Dorsolateral prefrontal cortex (tissue), 120 donors: ENCODE measurements at regions of chr17 and their contacts with region 1.

Region 1: GRCh38 chr17:58006924-58007780 is at the start of gene SRSF1:
- DNase-seq: peak; percentile 92 to 97 (median 95)
- H3K4me3 ChIP-seq: peak within 1 kb of the TSS; percentile 62 to 100 (median 96)
- H3K27ac ChIP-seq: peak within 1 kb of the TSS; percentile 85 to 99 (median 98)
- H3K27me3 ChIP-seq: no peaks in the 10 kb centered on the region
- CTCF ChIP-seq: peak in 10 of 56 donors; percentile 6 to 47 (median 18)
- total RNA-seq, gene SRSF1: 111 to 191 (median 137) TPM

Region 2: DNA sequence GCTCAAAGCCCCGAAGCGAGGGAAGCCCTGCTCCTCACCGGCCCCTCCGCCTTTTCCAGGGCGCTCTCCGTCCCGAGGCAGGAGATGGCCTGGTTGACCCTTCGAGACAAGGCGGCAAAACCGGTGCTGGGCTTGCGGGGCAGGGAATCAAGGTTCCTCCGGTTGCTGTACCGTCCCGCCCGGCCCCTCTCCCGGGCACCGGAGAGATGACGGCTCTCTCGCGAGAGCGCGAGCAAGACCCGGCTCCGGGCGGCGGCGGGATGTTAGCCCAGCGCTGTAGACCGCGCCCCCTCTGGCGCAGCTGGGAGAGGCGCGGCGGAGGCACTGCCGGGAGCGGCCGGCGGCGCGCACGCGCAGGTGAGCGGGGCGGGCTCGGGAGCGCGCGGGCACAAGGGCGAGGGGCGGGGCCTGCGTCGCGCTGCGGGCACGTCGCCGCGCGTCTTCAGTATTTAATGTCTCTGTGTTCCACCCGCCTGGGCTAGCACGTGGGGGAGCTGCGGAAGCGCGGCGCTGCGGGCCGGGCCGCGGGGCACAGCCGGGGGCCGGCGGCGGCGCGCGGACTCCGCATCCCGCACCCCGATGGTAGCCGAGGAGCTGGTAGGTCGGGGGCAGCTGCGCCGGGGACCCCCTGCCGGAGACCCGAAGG is 922.2 kb before region 1 on chr17 and contains the start of gene AKAP1:
- intact Hi-C with region 1: loop called in 1 of 2 experiments (anchors 5 kb)
- DNase-seq: peak; percentile 81 to 97 (median 91)
- H3K4me3 ChIP-seq: peak within 1 kb of the TSS; percentile 62 to 99 (median 90)
- H3K27ac ChIP-seq: peak within 1 kb of the TSS; percentile 72 to 99 (median 95)
- H3K27me3 ChIP-seq: no peaks in the 10 kb centered on the region
- CTCF ChIP-seq: peak in 47 of 56 donors; percentile 8 to 70 (median 47)
- total RNA-seq, gene AKAP1: 37.5 to 77.9 (median 57.2) TPM

Region 3: GRCh38 chr17:57849874-57850754 is 157.0 kb before region 1 on chr17 and contains the start of gene MRPS23:
- intact Hi-C with region 1: loop called in 1 of 2 experiments (anchors 2 kb)
- DNase-seq: peak; percentile 95 to 99 (median 98)
- H3K4me3 ChIP-seq: peak within 1 kb of the TSS; percentile 67 to 100 (median 94)
- H3K27ac ChIP-seq: peak within 1 kb of the TSS; percentile 53 to 97 (median 91)
- H3K27me3 ChIP-seq: no peaks in the 10 kb centered on the region
- CTCF ChIP-seq: peak in 37 of 56 donors; percentile 7 to 58 (median 36)
- total RNA-seq, gene MRPS23: 32.8 to 72.7 (median 51.3) TPM

Region 4: GRCh38 chr17:57965521-57966160 is 41.5 kb before region 1 on chr17:
- intact Hi-C with region 1: no loop called
- DNase-seq: no peak
- H3K4me3 ChIP-seq: no peak overlapping the region
- H3K27ac ChIP-seq: no peak overlapping the region
- H3K27me3 ChIP-seq: no peaks in the 10 kb centered on the region
- CTCF ChIP-seq: no peak

Region 5: GRCh38 chr17:58082870-58083490 is 75.8 kb after region 1 on chr17 and contains the start of gene DYNLL2:
- intact Hi-C with region 1: loop called (anchors 1 kb)
- DNase-seq: peak; percentile 77 to 93 (median 88)
- H3K4me3 ChIP-seq: peak within 1 kb of the TSS; percentile 47 to 99 (median 92)
- H3K27ac ChIP-seq: peak within 1 kb of the TSS; percentile 67 to 97 (median 94)
- H3K27me3 ChIP-seq: no peaks in the 10 kb centered on the region
- CTCF ChIP-seq: peak in 2 of 56 donors; percentile 11 to 18
- total RNA-seq, gene DYNLL2: 59.6 to 128 (median 88.8) TPM

Region 6: GRCh38 chr17:58112970-58113631 is 105.9 kb after region 1 on chr17:
- intact Hi-C with region 1: loop called in 1 of 2 experiments (anchors 2 kb)
- DNase-seq: peak; percentile 67 to 90 (median 79)
- H3K4me3 ChIP-seq: peak overlapping the region in 3 of 59 donors; percentile 9 to 27 (median 22)
- H3K27ac ChIP-seq: no peak overlapping the region
- H3K27me3 ChIP-seq: peaks cover 0 to 4% (median 0%) of the 10 kb centered on the region in 45 donors
- CTCF ChIP-seq: peak; percentile 78 to 98 (median 94)

Region 7: GRCh38 chr17:58219001-58219788 is 212.0 kb after region 1 on chr17 and contains the start of gene MKS1:
- intact Hi-C with region 1: loop called (anchors 10 kb)
- DNase-seq: peak; percentile 90 to 96 (median 95)
- H3K4me3 ChIP-seq: peak within 1 kb of the TSS; percentile 56 to 97 (median 82)
- H3K27ac ChIP-seq: peak within 1 kb of the TSS in 54 of 59 donors; percentile 36 to 91 (median 77)
- H3K27me3 ChIP-seq: no peaks in the 10 kb centered on the region
- CTCF ChIP-seq: peak; percentile 12 to 82 (median 66)
- total RNA-seq, gene MKS1: 16.0 to 48.1 (median 25.0) TPM

Region 8: GRCh38 chr17:58360296-58361063 is 353.3 kb after region 1 on chr17:
- intact Hi-C with region 1: no loop called
- DNase-seq: no peak
- H3K4me3 ChIP-seq: no peak overlapping the region
- H3K27ac ChIP-seq: no peak overlapping the region
- H3K27me3 ChIP-seq: no peaks in the 10 kb centered on the region
- CTCF ChIP-seq: no peak